ENCODE measurements at regions of chr7 and their contacts with region 1.

Region 1: GRCh38 chr7:111012799-111013675 is 77.9 kb upstream of the LRRN3 start:
- DNase-seq: peak in 10 of 14 experiments; percentile 6 to 74 (median 16)
- ATAC-seq: peak; percentile 87
- H3K4me3 ChIP-seq: peak overlapping the region; percentile 35
- H3K4me3 Mint-ChIP-seq: peak overlapping the region; percentile 69
- H3K27ac ChIP-seq: peak overlapping the region; percentile 66 to 80
- H3K27ac Mint-ChIP-seq: no peak overlapping the region
- H3K4me1 ChIP-seq: peaks cover 19% of the 10 kb centered on the region
- H3K4me1 Mint-ChIP-seq: peaks cover 36% of the 10 kb centered on the region
- H3K27me3 ChIP-seq: no peaks in the 10 kb centered on the region
- H3K27me3 Mint-ChIP-seq: no peaks in the 10 kb centered on the region
- CTCF ChIP-seq: no peak

Region 2: DNA sequence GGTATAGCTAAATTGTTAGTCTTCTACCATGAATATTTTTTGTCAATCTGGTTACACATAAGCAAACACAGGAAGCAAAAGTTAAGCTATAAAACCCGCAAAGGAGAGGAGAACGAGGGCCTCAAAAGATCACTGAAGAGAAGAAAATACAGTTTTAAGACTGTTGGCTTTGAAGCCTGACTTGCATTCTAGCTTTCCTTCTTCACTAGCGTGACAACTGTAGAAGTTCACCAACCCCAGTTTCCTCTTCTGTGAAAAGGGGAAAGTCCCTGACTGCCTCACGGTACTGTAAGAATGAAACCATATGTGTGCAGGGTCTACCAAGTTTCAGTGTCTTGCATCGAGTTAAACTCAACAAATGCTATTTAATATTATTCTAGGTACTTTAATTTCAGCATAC is 70.4 kb after region 1 on chr7:
- CTCF ChIA-PET with region 1: no interaction called
- POLR2A ChIA-PET with region 1: interaction called, 64 read pairs
- intact Hi-C with region 1: loop called in 1 of 2 experiments (anchors 5 kb)
- DNase-seq: peak in 10 of 14 experiments; percentile 16 to 91 (median 40)
- ATAC-seq: peak; percentile 95
- H3K4me3 ChIP-seq: peak overlapping the region; percentile 2
- H3K4me3 Mint-ChIP-seq: peak overlapping the region; percentile 47
- H3K27ac ChIP-seq: peak overlapping the region; percentile 38 to 42
- H3K27ac Mint-ChIP-seq: peak overlapping the region; percentile 73
- H3K4me1 ChIP-seq: peaks cover 20% of the 10 kb centered on the region
- H3K4me1 Mint-ChIP-seq: peaks cover 77% of the 10 kb centered on the region
- H3K27me3 ChIP-seq: no peaks in the 10 kb centered on the region
- H3K27me3 Mint-ChIP-seq: no peaks in the 10 kb centered on the region
- CTCF ChIP-seq: no peak